Activated B cell treated with CpG ODN at 0.5 μM for 24 hours (primary cell): ENCODE measurements at regions of chr1 and their contacts with region 1.

Region 1: GRCh38 chr1:218284934-218285635 is at the start of gene RRP15:
- DNase-seq: peak; percentile 85
- ATAC-seq: peak; percentile 99
- H3K4me3 Mint-ChIP-seq: peak within 1 kb of the TSS; percentile 96
- H3K27ac Mint-ChIP-seq: peak within 1 kb of the TSS; percentile 97
- H3K4me1 Mint-ChIP-seq: peaks cover 30% of the 10 kb centered on the region
- H3K27me3 Mint-ChIP-seq: peaks cover 9% of the 10 kb centered on the region
- CTCF ChIP-seq: no peak
- total RNA-seq, gene RRP15: 26.9 and 27.3 TPM in 2 replicates

Region 2: DNA sequence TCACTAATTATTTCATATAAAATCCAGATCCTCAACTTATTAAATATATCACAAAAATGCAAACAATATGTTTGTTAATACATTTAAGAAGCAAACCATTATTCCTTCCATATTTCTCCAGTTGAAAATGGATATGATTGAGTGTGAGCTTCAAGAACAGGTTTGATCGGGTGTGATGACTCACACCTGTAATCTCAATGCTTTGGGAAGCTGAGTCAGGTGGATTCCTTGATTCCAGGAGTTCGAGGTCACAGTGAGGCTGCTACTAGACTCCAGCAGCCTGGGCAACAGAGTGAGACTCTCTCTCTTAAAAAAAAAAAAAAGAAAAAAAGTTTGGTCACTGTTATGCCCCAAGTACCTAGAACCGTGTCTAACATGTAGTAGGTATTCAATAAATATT is 42.9 kb before region 1 on chr1:
- CTCF ChIA-PET with region 1: no interaction called
- POLR2A ChIA-PET with region 1: no interaction called
- intact Hi-C with region 1: no loop called
- DNase-seq: no peak
- ATAC-seq: no peak
- H3K4me3 Mint-ChIP-seq: no peak overlapping the region
- H3K27ac Mint-ChIP-seq: no peak overlapping the region
- H3K4me1 Mint-ChIP-seq: no peaks in the 10 kb centered on the region
- H3K27me3 Mint-ChIP-seq: peaks cover 7% of the 10 kb centered on the region
- CTCF ChIP-seq: no peak

Region 3: GRCh38 chr1:218600976-218601375 is 315.9 kb after region 1 on chr1:
- CTCF ChIA-PET with region 1: no interaction called
- POLR2A ChIA-PET with region 1: no interaction called
- intact Hi-C with region 1: no loop called
- DNase-seq: no peak
- ATAC-seq: no peak
- H3K4me3 Mint-ChIP-seq: no peak overlapping the region
- H3K27ac Mint-ChIP-seq: no peak overlapping the region
- H3K4me1 Mint-ChIP-seq: no peaks in the 10 kb centered on the region
- H3K27me3 Mint-ChIP-seq: peaks cover 4% of the 10 kb centered on the region
- CTCF ChIP-seq: no peak

Region 4: DNA sequence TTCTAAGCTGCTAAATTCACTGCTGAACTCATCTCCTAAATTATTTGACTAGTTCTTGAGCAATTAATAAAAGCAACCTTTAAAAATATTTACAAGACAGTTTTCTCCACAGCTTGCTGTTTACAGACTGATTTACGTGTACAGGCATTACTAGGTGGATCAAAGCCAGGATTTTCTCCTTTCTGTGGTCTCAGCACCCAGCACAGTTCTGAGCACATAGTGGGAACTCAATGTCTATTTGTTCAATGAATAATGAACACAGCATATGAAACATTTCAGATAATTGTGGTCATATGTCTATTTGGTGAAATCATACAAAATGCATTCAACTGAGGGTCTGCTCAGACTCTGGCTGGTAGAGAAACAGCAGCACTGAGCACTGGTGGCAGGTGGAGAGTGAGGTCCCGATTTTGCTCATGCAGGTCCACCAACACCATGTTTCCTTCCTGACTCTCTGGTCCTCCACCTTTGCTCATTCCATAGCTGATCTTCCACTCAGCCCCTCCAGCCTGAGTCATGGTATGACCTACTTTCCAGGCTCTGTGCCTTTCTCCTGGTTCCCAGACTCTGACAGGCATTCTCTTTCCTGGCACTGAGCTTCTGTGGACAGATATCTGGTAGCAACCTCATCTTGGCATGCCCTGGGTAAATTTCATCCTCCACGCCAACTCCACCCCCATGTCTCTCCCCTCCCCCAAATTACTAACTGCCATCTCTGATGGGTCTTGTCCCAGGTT is 371.4 kb after region 1 on chr1:
- CTCF ChIA-PET with region 1: no interaction called
- POLR2A ChIA-PET with region 1: no interaction called
- intact Hi-C with region 1: no loop called
- DNase-seq: no peak
- ATAC-seq: no peak
- H3K4me3 Mint-ChIP-seq: no peak overlapping the region
- H3K27ac Mint-ChIP-seq: no peak overlapping the region
- H3K4me1 Mint-ChIP-seq: no peaks in the 10 kb centered on the region
- H3K27me3 Mint-ChIP-seq: peaks cover 10% of the 10 kb centered on the region
- CTCF ChIP-seq: no peak

Region 5: GRCh38 chr1:220046052-220046930 is 1761.2 kb after region 1 on chr1 and contains the start of gene EPRS1:
- CTCF ChIA-PET with region 1: no interaction called
- POLR2A ChIA-PET with region 1: no interaction called
- intact Hi-C with region 1: loop called (anchors 10 kb)
- DNase-seq: peak; percentile 89
- ATAC-seq: peak; percentile 99
- H3K4me3 Mint-ChIP-seq: peak within 1 kb of the TSS; percentile 97
- H3K27ac Mint-ChIP-seq: peak within 1 kb of the TSS; percentile 93
- H3K4me1 Mint-ChIP-seq: peaks cover 26% of the 10 kb centered on the region
- H3K27me3 Mint-ChIP-seq: no peaks in the 10 kb centered on the region
- CTCF ChIP-seq: peak; percentile 21
- total RNA-seq, gene EPRS1: 114 and 119 TPM in 2 replicates